AG04449 (cell line): ENCODE measurements at regions of chr17 and their contacts with region 1.

Region 1: DNA sequence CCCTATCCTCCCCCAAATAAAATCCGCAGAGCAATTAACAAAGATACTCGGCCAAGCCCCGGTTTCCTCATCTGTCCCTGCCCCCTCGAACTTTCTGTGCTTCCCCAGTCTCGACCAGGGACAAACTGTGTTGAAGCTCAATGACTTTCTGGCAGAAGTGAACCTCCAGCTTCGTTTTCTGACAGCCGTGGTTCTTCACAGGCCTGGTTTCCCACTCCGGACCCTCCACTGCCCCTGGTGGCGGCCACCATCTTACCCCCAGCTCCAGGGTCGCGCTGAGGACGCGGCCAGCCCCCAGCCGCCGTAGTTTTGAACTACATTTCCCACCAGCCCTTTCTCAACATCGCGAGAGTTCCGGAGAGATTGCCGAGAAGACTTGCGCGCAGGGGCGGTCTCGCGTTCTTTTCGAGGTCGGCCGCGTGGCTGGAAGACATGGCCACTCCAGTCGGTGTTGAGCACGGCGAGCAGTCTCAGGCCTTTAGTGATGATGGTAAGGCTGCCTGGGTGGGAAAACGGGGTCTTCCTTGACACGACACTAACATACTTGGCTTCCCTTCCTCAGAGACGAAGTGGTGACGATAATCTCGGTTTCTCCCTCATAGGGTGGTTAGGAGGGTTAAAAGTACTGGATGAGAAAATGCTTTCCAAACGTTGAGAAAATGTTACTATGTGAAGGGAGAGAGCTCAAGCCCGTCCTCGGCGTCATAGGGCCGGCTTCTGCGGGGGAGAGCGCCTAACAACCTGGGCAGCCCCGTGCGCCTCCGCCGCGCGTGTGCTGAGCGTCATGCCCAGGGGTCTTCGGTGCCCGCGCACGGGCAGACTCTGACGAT is 17.7 kb downstream of the PRCD start:
- DNase-seq: peak; percentile 77
- H3K4me3 ChIP-seq: peak overlapping the region; percentile 96
- CTCF ChIP-seq: peak; percentile 86

Region 2: GRCh38 chr17:76523084-76524037 is 34.2 kb before region 1 on chr17:
- CTCF ChIA-PET with region 1: interaction called, 57 read pairs
- POLR2A ChIA-PET with region 1: no interaction called
- DNase-seq: no peak
- H3K4me3 ChIP-seq: peak overlapping the region; percentile 27; the same call in 1 of the 2 replicates
- CTCF ChIP-seq: peak; percentile 99

Region 3: DNA sequence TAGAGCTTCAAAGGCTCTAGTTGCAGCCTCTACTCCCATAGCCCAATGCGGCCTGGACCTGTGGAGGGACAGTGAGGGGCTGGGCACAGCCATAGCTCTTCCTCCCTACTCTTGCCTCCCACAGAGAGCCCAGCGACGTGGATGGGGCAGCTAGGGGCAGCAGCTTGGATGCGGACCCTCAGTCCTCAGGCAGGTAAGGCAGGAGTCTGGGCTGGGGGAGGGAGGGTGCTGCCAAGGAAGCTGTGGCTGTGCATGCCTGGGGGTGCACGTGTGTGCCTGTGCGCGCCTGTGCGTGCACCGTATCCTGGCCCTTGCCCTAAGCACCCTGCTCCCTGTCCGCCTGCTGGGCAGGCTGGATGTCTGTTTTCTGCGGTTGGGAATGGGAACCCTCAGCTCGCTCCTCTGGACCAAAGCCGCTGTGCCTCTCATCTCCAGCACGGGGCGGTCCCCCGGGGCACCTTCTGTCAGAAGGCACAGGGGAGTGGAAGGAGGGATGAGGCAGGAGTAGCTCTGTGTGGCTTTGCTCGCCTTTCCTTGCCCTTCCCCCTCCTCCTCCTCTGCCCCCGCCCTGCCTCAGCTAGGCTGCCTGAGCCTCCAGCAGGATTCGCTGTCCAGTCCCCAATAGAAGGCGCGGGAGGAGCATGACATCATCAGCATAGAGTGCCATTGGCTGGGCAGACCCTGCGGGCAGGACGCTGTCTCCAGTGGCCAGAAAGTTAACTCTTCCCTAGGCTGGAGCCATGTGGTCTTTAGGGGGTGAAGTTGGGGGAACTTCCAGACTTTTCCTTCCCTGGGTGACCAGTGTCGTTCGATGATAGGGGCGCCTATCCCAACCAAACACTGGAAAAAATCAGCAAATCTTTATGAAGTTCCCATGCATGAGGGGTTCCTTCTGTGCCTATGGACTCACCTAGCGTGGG is 16.9 kb before region 1 on chr17:
- CTCF ChIA-PET with region 1: interaction called, 43 read pairs
- POLR2A ChIA-PET with region 1: interaction called, 6 read pairs
- DNase-seq: no peak
- H3K4me3 ChIP-seq: peak overlapping the region; percentile 51
- CTCF ChIP-seq: peak; percentile 30

Region 4: DNA sequence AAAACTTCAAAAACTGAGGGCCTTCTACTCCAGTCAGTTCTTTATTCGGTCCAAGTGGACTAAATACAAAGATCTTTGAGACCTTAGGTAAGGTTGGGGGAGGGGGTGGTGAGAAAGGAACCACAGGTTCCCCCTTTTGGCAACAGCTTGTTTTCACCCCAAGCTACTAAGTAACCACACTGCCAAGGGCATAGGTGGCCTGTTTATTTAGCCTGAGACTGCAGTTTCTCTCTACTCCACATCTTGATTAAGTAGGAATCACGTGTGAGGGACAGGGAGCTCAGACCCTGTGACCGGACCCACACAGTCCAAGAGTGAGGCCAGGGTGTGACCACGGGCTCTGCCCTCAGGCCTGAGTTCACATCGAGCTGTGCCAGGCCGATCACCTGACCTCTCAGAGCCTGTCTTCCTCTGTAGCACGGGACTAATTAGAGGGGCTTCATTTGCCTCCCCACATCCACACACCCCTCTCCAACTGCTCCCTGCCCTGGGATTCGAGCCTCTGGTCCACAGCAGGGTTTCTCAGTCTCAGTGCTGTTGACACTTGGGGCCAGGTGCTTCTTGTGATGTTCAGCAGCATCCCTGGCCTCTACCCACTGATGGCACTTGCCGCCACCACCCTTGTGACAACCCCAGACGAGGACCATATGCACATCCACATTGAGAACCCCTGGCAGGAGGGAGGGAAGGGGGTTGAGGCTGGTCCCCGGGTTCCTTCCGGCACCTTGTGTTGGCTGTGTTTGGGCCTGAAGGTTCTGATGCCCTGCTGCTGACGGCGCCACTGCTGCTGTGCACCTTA is 10.2 kb after region 1 on chr17:
- CTCF ChIA-PET with region 1: interaction called, 21 read pairs
- POLR2A ChIA-PET with region 1: no interaction called
- DNase-seq: no peak
- H3K4me3 ChIP-seq: no peak overlapping the region
- CTCF ChIP-seq: no peak

Region 5: GRCh38 chr17:76709077-76709950 is 151.7 kb after region 1 on chr17:
- CTCF ChIA-PET with region 1: interaction called, 41 read pairs
- POLR2A ChIA-PET with region 1: interaction called, 5 read pairs
- DNase-seq: peak; percentile 98
- H3K4me3 ChIP-seq: peak overlapping the region; percentile 92
- CTCF ChIP-seq: no peak

Region 6: DNA sequence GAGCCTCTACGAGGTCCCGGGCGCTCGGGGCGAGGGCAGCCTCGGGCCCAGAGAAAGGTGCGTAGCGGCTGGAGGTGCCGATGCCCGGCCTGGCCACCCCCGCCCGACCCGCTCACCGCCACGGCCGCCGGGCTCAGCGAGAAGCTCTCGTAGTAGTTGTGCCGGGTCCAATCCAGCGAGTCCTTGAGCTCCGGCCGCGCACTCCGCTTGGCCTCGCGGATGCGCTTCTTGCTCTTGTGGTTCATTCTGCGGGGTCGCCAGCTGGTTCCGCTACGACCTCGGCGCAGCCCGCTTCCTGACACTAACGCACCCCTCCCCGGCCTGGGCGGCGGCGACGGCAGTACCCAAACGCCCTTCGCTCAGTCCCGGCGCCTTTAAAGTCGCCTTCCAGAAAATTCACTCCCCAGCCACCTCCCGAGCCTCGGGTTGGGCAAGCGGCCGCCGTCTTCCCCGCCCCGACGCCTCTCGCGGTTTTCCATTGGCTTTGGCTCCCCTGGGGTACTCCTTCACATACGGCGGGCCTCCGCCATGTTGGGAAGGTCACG is 168.7 kb after region 1 on chr17 and contains the start of gene JMJD6:
- CTCF ChIA-PET with region 1: interaction called, 10 read pairs
- POLR2A ChIA-PET with region 1: no interaction called
- DNase-seq: peak; percentile 75
- H3K4me3 ChIP-seq: peak within 1 kb of the TSS; percentile 91
- CTCF ChIP-seq: no peak